ENCODE measurements at regions of chr9 and their contacts with region 1.

Region 1: DNA sequence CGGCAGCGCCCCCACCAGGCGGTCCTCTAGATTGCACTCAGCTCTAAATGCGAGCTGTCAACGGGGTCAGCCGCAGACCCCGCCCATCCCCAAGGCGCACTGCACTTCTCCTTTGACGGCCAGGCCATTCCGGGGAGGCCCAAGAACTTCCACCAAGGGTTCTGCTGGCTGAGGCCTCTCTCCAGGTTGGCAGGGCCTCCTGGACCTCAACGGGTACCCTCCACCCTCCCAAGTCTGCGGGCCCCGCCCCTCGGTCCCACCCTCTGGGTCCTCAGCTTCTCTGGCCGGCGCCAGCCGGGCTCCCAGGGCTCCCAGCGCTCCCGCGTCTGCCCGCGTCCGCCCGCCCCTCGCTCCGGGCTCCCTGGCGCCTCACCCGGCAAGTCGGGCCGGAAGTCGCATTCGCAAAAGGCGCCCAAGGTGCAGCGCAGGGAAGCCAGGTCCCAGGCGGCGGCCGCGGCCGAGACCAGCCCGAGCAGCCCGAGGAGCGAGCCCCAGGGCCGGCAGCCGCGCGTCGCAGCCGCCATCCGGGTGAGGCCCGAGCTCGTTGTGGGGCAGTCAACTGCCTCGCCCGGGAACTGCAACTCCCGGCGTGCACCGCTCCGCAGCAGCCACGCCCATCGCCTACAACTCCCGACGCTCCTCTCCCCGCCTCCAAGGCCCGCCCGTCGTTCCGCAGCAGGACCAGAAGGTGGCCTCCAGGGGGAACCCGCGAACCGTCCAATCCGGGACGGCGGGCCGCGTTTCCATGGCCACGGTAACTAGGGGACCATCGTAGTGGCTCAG is at the start of gene TOR2A:
- DNase-seq: peak; percentile 91 to 97
- ATAC-seq: peak; percentile 92 to 95
- H3K4me3 ChIP-seq: peak within 1 kb of the TSS; percentile 72
- H3K27ac ChIP-seq: peak within 1 kb of the TSS; percentile 96
- H3K4me1 ChIP-seq: peaks cover 12% of the 10 kb centered on the region
- CTCF ChIP-seq: peak; percentile 90
- EP300 ChIP-seq: no peak; a peak in 1 of 5 replicates
- POLR2A ChIP-seq: peak; percentile 78
- RAD21 ChIP-seq: peak; percentile 98
- polyA plus RNA-seq, gene TOR2A: 4.9 and 5.5 TPM in 2 replicates

Region 2: DNA sequence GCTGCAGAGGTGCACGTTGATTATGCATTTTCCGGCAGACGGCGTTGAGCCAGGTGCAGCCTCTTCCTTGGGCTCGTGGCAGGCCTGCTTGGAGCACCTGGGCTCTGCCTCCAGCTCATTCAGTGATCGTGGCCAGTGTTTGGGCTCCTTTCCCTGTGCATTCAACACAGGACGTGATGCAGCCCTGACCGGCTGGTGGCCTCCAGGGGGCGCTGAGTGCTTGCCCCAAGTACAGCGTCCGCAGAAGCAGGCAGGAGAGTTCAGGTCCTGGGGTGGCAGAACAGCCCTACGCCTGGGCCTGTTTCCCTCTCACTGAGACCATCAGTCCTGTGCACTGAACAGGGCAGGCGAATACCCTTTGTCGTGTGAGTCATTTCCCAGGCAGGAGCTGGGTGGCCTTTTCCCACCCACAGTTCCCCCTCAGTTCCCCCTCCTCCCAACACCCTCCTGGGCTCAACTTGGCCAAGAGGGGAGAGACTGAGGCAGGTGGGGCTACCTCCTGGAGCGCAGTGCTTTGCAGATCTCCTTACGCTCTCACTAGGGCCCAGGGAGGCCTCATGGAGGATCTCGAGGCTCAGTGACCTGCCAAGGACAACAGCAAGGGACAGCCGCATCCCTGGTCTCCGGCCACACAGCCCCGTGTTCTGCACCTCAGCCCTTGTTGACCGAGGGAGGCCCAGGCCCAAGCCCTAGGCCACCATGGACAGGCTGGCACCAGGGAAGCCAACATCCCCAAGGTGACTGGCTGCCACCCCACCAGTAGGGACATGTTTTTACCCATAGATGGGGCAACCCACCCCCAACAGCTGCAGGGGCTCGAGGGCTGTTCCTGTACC is 230.8 kb before region 1 on chr9:
- CTCF ChIA-PET with region 1: interaction called, 44 read pairs
- POLR2A ChIA-PET with region 1: no interaction called
- DNase-seq: peak; percentile 48 to 89
- ATAC-seq: peak; percentile 69 to 87
- H3K4me3 ChIP-seq: no peak overlapping the region
- H3K27ac ChIP-seq: peak overlapping the region; percentile 26 to 79; a peak in 4 of 6 replicates
- H3K4me1 ChIP-seq: peaks cover 24% of the 10 kb centered on the region
- CTCF ChIP-seq: peak; percentile 84
- EP300 ChIP-seq: no peak
- POLR2A ChIP-seq: no peak
- RAD21 ChIP-seq: peak; percentile 94 to 96

Region 3: GRCh38 chr9:127642082-127642740 is 92.7 kb before region 1 on chr9:
- CTCF ChIA-PET with region 1: interaction called, 13 read pairs
- POLR2A ChIA-PET with region 1: no interaction called
- DNase-seq: no peak
- ATAC-seq: no peak
- H3K4me3 ChIP-seq: no peak overlapping the region
- H3K27ac ChIP-seq: 0 out of 6 replicates have a peak overlapping the region, but pooled peaks of 1 of the 2 experiments have one; percentile 27
- H3K4me1 ChIP-seq: peaks cover 14% of the 10 kb centered on the region; the same call in 2 of the 3 replicates
- CTCF ChIP-seq: no peak
- EP300 ChIP-seq: no peak
- POLR2A ChIP-seq: no peak
- RAD21 ChIP-seq: no peak

Region 4: GRCh38 chr9:127715394-127716337 is 19.3 kb before region 1 on chr9 and contains the starts of genes PTRH1 and TTC16:
- CTCF ChIA-PET with region 1: interaction called, 63 read pairs
- POLR2A ChIA-PET with region 1: interaction called, 4 read pairs
- DNase-seq: peak; percentile 96 to 97
- ATAC-seq: peak; percentile 92 to 95
- H3K4me3 ChIP-seq: peak within 1 kb of the TSS; percentile 68
- H3K27ac ChIP-seq: peak within 1 kb of the TSS; percentile 73 to 79
- H3K4me1 ChIP-seq: peaks cover 17% of the 10 kb centered on the region
- CTCF ChIP-seq: no peak
- EP300 ChIP-seq: no peak
- POLR2A ChIP-seq: no peak; the same call in 1 of the 2 replicates
- RAD21 ChIP-seq: no peak
- polyA plus RNA-seq, gene PTRH1: 3.5 and 5.1 TPM in 2 replicates
- polyA plus RNA-seq, gene TTC16: 0.03 TPM in 1 of 2 replicates, not detected in the other

Region 5: GRCh38 chr9:127770905-127771569 is 36.1 kb after region 1 on chr9:
- CTCF ChIA-PET with region 1: interaction called, 47 read pairs
- POLR2A ChIA-PET with region 1: interaction called, 5 read pairs
- DNase-seq: peak; percentile 86 to 98
- ATAC-seq: peak; percentile 92 to 98
- H3K4me3 ChIP-seq: peak overlapping the region; percentile 40
- H3K27ac ChIP-seq: peak overlapping the region in 1 of 2 experiments; percentile 54; a peak in 2 of 6 replicates
- H3K4me1 ChIP-seq: peaks cover 4% of the 10 kb centered on the region; the same call in 1 of the 3 replicates
- CTCF ChIP-seq: no peak
- EP300 ChIP-seq: no peak
- POLR2A ChIP-seq: no peak
- RAD21 ChIP-seq: no peak

Region 6: GRCh38 chr9:127854184-127854806 is 119.4 kb after region 1 on chr9 and contains the start of gene ENG:
- CTCF ChIA-PET with region 1: interaction called, 10 read pairs
- POLR2A ChIA-PET with region 1: no interaction called
- DNase-seq: no peak
- ATAC-seq: peak; percentile 15 to 46; a peak in 3 of 6 replicates
- H3K4me3 ChIP-seq: no peak within 1 kb of the TSS
- H3K27ac ChIP-seq: no peak within 1 kb of the TSS
- H3K4me1 ChIP-seq: no peaks in the 10 kb centered on the region; the same call in 2 of the 3 replicates
- CTCF ChIP-seq: no peak
- EP300 ChIP-seq: no peak
- POLR2A ChIP-seq: no peak
- RAD21 ChIP-seq: no peak
- polyA plus RNA-seq, gene ENG: not detected in 2 replicates

Measured in A549 (cell line).